Breast epithelium (tissue), 4 donors: ENCODE measurements at regions of chr14 and their contacts with region 1.

Region 1: DNA sequence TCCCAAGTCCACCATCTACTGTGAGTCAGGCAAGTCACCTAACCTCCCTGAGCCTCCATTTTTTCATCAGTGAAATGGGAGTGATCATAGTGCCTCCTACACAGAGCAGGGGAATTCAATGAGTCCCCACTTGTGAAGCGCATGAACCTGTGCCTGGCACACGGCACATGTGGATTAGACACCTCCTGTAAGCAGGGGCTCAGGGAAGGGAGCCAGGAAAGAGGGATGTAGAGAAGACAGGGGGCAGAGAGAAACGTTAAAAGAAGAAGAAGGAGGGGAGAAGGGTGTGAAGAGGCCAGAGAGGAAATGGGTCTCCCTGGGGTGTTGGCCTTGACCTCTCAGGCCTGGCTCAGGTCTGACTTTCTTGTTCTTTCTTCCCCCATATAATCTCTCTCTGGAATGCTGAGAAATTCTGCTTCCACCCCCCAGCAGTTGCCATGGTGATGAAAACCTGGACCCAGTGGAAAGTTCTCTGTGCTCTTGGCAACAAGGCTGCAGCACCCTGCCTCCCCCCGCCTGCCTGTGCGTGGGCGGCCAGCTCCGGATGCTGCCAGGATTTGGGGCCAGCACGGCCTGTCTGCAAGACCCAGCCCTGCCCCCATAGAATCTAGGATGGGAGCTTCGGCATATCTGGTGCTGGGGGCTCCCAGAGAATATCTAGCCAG is 94.5 kb downstream of the CALM1 start:
- DNase-seq: peak in 1 of 2 donors; percentile 71
- H3K4me3 ChIP-seq: peak overlapping the region in 1 of 3 donors; percentile 28
- H3K27ac ChIP-seq: peak overlapping the region in 1 of 2 donors; percentile 13
- H3K4me1 ChIP-seq: peaks cover 7 to 12% of the 10 kb centered on the region in 2 donors
- H3K27me3 ChIP-seq: no peaks in the 10 kb centered on the region
- CTCF ChIP-seq: no peak
- POLR2A ChIP-seq: no peak

Region 2: DNA sequence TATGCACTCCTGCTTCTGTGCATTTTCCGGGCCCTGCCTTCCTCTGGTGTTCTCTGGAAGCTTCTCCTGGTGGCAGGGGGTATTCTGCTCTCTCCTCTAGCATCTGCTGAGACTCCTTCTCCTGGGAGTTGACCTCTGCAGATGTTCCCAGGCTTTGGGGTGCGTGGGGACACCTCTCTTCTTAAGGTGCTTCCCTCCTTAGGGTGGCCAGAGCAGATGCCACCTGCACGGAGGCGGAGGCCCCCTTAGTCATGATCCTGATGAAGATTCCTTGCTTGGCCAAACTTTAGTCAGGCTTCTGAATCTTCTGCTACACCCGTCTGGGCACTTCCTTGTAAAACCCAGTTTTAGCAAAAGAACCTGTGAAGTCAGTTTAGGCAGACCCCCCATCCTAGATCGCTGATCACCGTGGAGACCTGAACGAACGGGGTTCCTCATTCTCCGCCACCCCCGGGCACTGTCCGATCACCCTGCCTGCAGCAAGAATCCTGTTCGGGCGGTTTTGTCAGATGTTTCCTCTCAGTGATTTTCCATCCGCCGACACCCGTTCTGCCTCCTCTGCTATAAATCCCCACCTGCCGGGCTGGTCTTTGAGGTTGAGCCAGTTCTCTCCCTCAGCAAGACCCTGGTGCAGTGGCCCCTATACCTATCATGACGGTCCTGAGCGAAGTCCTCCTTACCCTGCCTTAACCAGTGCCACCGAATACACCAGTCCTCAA is 17.3 kb after region 1 on chr14:
- intact Hi-C with region 1: loop called (anchors 2 kb)
- DNase-seq: peak in 1 of 2 donors; percentile 73
- H3K4me3 ChIP-seq: no peak overlapping the region
- H3K27ac ChIP-seq: peak overlapping the region; percentile 76 to 96
- H3K4me1 ChIP-seq: peaks cover 4 to 23% of the 10 kb centered on the region in 2 donors
- H3K27me3 ChIP-seq: no peaks in the 10 kb centered on the region
- CTCF ChIP-seq: no peak
- POLR2A ChIP-seq: no peak